Activated T-helper 2 cell treated with anti-CD3 and anti-CD28 coated beads, Interferon-gamma antibody, Interleukin-2, Interleukin-4, amounts not matched to agents 10 μg/mL and 5 μg/mL and 100 μg/mL, durations not matched to agents 14 hours and 24 hours and 36 hours (primary cell): ENCODE measurements at regions of chrX and their contacts with region 1.

Region 1: DNA sequence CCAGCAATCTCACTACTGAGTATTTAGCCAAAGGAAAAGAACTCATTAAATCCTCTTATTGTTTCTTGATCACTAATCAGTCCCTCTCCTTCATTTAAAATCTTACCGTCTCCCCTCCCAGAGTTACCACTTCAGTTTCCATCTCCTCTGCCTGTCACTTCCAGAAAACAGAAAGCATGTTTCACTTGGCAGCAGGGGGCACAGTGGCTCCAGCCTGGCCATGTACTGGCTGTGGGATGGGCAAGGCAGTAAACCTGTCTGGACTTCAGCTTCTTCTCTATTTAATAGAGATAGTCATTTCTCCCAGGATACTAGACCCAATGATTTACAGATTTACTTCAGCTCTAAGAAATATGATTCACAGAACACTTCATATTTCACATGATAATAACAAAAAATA is 63.2 kb downstream of the CD40LG start:
- DNase-seq: no peak
- H3K4me3 Mint-ChIP-seq: no peak overlapping the region
- H3K27ac Mint-ChIP-seq: peak overlapping the region; percentile 95
- H3K4me1 Mint-ChIP-seq: peaks cover 44% of the 10 kb centered on the region
- H3K27me3 Mint-ChIP-seq: no peaks in the 10 kb centered on the region

Region 2: GRCh38 chrX:136725446-136726104 is 14.4 kb after region 1 on chrX:
- intact Hi-C with region 1: loop called (anchors 1 kb)
- DNase-seq: no peak
- H3K4me3 Mint-ChIP-seq: no peak overlapping the region
- H3K27ac Mint-ChIP-seq: no peak overlapping the region
- H3K4me1 Mint-ChIP-seq: peaks cover 26% of the 10 kb centered on the region
- H3K27me3 Mint-ChIP-seq: no peaks in the 10 kb centered on the region

Region 3: GRCh38 chrX:136747003-136747986 is 36.1 kb after region 1 on chrX:
- intact Hi-C with region 1: loop called (anchors 5 kb)
- DNase-seq: no peak
- H3K4me3 Mint-ChIP-seq: peak overlapping the region; percentile 30
- H3K27ac Mint-ChIP-seq: peak overlapping the region; percentile 77
- H3K4me1 Mint-ChIP-seq: peaks cover 82% of the 10 kb centered on the region
- H3K27me3 Mint-ChIP-seq: no peaks in the 10 kb centered on the region

Region 4: DNA sequence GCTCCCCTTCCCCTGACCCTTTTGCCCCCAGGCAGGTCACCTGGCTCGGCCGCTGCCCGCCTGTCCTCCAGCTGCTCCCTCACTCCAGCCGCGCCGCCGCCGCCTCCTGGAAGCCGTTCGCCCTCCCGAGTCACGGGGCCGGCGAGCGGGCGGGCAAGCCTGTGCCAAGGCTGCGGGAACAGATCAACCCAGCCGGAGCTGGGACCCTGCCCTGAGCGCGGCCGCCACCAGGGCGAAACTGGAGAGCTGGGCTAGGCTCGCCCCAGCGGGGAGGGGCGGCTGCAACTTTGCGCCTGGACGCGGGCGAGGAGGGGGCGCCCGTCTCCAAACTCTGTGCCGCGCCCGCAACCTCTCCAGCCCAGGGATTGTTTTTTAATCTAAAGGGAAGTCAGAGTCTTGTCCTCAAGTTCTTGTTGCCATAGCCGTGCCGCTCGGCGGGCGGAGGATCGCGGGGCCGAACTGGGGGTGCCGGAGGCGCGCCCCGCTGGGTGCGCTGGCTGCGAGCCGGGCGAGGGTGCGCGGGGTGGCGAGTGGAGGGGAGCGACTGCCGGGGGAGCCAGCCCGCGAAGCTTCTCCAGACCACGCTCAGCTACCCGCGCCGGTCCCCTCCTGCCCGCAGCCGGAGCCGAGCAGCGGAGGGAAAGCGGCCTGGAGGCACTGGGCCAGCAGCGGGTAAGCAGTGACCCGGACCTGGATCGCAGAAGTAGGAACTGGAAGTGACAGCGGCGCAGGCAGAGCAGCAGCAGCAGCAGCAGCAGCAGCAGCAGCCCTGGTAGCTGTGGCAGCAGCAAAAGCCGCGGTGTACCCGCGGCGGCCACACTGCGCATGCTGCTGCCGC is 56.2 kb after region 1 on chrX:
- intact Hi-C with region 1: loop called (anchors 2 kb)
- DNase-seq: no peak
- H3K4me3 Mint-ChIP-seq: peak overlapping the region; percentile 78
- H3K27ac Mint-ChIP-seq: peak overlapping the region; percentile 93
- H3K4me1 Mint-ChIP-seq: peaks cover 56% of the 10 kb centered on the region
- H3K27me3 Mint-ChIP-seq: no peaks in the 10 kb centered on the region

Region 5: GRCh38 chrX:136847876-136848337 is 136.8 kb after region 1 on chrX:
- intact Hi-C with region 1: loop called (anchors 5 kb)
- DNase-seq: peak; percentile 17
- H3K4me3 Mint-ChIP-seq: peak overlapping the region; percentile 78
- H3K27ac Mint-ChIP-seq: peak overlapping the region; percentile 91
- H3K4me1 Mint-ChIP-seq: peaks cover 17% of the 10 kb centered on the region
- H3K27me3 Mint-ChIP-seq: no peaks in the 10 kb centered on the region

Region 6: GRCh38 chrX:136880452-136881013 is 169.4 kb after region 1 on chrX and contains the start of gene RBMX:
- intact Hi-C with region 1: loop called (anchors 2 kb)
- DNase-seq: peak; percentile 87
- H3K4me3 Mint-ChIP-seq: peak within 1 kb of the TSS; percentile 98
- H3K27ac Mint-ChIP-seq: peak within 1 kb of the TSS; percentile 98
- H3K4me1 Mint-ChIP-seq: peaks cover 20% of the 10 kb centered on the region
- H3K27me3 Mint-ChIP-seq: no peaks in the 10 kb centered on the region
- total RNA-seq, gene RBMX: 287 and 311 TPM in 2 replicates

Region 7: DNA sequence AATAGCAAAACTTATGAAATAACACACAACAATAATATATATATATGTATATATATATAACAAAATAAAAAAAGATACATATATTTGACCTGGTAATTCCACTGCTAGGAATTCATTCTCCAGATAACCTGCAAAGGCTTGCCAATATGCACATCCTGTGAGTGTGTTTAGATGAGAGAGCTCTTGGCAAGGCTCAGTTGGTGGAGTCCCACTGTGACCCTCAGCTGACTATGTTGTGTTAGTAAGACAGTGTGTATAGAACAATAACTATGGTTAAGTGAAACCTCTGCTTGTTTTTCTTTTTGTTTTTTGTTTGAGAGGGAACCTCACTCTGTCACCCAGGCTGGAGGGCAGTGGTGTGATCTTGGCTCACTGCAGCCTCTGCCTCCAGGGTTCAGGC is 208.9 kb after region 1 on chrX:
- intact Hi-C with region 1: loop called (anchors 2 kb)
- DNase-seq: no peak
- H3K4me3 Mint-ChIP-seq: no peak overlapping the region
- H3K27ac Mint-ChIP-seq: no peak overlapping the region
- H3K4me1 Mint-ChIP-seq: peaks cover 2% of the 10 kb centered on the region
- H3K27me3 Mint-ChIP-seq: no peaks in the 10 kb centered on the region